Activated CD4-positive, alpha-beta T cell treated with anti-CD3 and anti-CD28 coated beads, Interleukin-2, amount 10 ng/mL, durations not matched to agents 24 days and 14 days (primary cell): ENCODE measurements at regions of chr14 and their contacts with region 1.

Region 1: GRCh38 chr14:60724137-60724619 is at the start of gene SIX4:
- DNase-seq: peak; percentile 63
- H3K4me3 Mint-ChIP-seq: peak within 1 kb of the TSS; percentile 90
- H3K27ac Mint-ChIP-seq: peak within 1 kb of the TSS; percentile 60
- H3K4me1 Mint-ChIP-seq: peaks cover 24% of the 10 kb centered on the region
- H3K27me3 Mint-ChIP-seq: peaks cover 77% of the 10 kb centered on the region
- total RNA-seq, gene SIX4: 0.23 and 0.52 TPM in 2 replicates

Region 2: DNA sequence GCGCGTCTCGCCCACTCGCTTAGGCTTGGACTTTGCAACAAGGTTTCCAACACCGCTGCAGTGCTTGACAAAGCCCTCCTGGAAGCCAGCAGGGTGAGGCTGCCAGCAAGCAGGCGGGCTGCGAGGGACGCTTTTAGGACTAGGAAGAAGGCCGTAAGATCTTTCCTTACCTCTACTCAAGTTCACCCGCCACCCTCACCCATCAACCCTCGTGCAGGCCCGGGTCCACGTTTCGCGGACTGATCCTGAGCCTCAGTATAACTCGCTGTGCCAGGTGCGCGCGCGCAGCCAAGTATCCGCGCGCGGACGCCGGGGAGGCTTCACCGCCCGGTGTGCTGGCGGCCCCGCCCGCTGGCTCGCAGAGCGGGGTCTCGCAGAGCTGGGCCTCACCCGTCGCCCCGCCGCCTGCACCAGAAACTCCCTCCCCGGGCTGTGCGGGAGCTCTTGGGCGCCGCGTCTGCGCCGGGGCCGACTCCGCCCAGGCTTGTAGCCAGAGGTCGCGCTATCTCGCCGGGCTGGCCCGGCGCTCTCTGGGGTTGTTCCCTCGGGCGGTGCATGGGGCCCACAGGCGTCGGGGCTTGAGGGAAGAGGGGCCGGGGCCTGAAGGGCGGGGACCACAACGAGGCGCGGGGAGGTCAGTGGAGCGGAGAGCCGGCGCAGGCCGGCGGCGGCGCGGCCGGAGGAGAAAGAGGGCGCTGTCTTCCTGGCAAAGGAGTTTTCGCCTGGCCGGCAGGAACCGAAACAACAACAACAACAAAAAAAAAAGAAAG is 67.3 kb before region 1 on chr14:
- intact Hi-C with region 1: loop called (anchors 5 kb)
- DNase-seq: peak; percentile 81
- H3K4me3 Mint-ChIP-seq: peak overlapping the region; percentile 88
- H3K27ac Mint-ChIP-seq: peak overlapping the region; percentile 41
- H3K4me1 Mint-ChIP-seq: peaks cover 34% of the 10 kb centered on the region
- H3K27me3 Mint-ChIP-seq: peaks cover 84% of the 10 kb centered on the region

Region 3: DNA sequence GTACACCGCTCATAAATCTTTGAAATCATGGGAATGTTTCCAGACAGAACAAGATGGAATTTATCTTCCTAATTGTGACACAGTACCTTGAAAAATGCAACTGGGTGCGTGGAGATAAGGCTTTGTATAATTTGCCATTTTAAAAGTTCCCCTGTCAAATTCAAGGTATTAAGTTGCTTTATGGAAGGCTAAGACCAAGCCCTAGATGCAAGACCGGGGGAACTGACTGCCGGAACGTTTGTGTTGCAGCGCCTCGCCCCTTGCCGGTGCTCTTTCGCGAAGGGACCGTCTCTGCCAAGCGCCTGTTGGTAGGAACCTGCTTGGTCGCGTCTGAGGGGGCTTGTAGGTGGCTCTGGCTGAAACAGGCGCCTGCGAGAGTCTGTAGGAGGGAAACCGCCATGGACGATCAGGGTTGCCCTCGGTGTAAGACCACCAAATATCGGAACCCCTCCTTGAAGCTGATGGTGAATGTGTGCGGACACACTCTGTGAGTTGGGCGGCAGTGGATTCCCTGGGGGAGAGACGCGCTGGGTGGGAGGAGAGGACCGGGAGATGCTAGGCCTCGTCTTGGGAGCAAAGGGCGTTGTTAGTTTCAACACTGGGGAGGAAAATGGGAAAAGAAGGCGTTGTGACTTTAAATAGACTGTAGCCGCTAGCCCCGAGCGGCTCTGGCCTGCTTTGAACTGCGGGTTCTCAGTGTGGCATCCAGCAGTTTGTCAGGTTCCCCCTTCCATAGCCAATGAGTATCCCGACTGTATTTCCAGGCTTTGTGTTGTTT is 10.5 kb after region 1 on chr14 and contains the start of gene MNAT1:
- intact Hi-C with region 1: loop called (anchors 1 kb)
- DNase-seq: peak; percentile 93
- H3K4me3 Mint-ChIP-seq: peak within 1 kb of the TSS; percentile 100
- H3K27ac Mint-ChIP-seq: peak within 1 kb of the TSS; percentile 88
- H3K4me1 Mint-ChIP-seq: peaks cover 16% of the 10 kb centered on the region
- H3K27me3 Mint-ChIP-seq: peaks cover 35% of the 10 kb centered on the region
- total RNA-seq, gene MNAT1: 42.6 and 45.0 TPM in 2 replicates

Region 4: GRCh38 chr14:60758885-60759284 is 34.7 kb after region 1 on chr14:
- intact Hi-C with region 1: no loop called
- DNase-seq: no peak
- H3K4me3 Mint-ChIP-seq: peak overlapping the region; percentile 60
- H3K27ac Mint-ChIP-seq: no peak overlapping the region
- H3K4me1 Mint-ChIP-seq: peaks cover 45% of the 10 kb centered on the region
- H3K27me3 Mint-ChIP-seq: peaks cover 3% of the 10 kb centered on the region

Region 5: GRCh38 chr14:60980811-60981632 is 256.8 kb after region 1 on chr14 and contains the starts of genes SLC38A6 and TRMT5:
- intact Hi-C with region 1: loop called (anchors 2 kb)
- DNase-seq: peak; percentile 98
- H3K4me3 Mint-ChIP-seq: no peak within 1 kb of the TSS
- H3K27ac Mint-ChIP-seq: no peak within 1 kb of the TSS
- H3K4me1 Mint-ChIP-seq: peaks cover 21% of the 10 kb centered on the region
- H3K27me3 Mint-ChIP-seq: no peaks in the 10 kb centered on the region
- total RNA-seq, gene SLC38A6: 4.7 and 5.9 TPM in 2 replicates
- total RNA-seq, gene TRMT5: 16.1 and 18.0 TPM in 2 replicates

Region 6: GRCh38 chr14:61025251-61026223 is 301.4 kb after region 1 on chr14:
- intact Hi-C with region 1: loop called (anchors 5 kb)
- DNase-seq: peak; percentile 87
- H3K4me3 Mint-ChIP-seq: no peak overlapping the region
- H3K27ac Mint-ChIP-seq: no peak overlapping the region
- H3K4me1 Mint-ChIP-seq: no peaks in the 10 kb centered on the region
- H3K27me3 Mint-ChIP-seq: peaks cover 2% of the 10 kb centered on the region

Region 7: DNA sequence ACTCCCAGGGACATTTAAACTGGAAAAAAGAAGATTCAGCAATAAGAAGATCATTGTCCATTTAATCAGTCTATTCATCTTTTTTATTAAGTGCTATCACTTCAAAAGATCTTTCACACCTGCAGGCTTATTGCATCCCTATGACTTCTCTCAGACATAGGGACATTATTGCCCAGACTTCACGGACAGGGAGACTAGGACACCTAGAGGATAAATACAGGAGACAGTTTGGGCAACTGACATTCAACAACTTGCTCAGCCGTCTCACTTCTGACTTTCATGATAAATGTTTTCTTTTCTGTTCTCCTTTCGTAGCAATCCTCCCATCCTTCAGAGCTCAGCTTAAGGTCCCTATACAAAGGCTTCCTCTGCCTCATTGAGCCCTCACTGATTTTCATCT is 472.6 kb after region 1 on chr14:
- intact Hi-C with region 1: loop called (anchors 10 kb)
- DNase-seq: no peak
- H3K4me3 Mint-ChIP-seq: no peak overlapping the region
- H3K27ac Mint-ChIP-seq: no peak overlapping the region
- H3K4me1 Mint-ChIP-seq: no peaks in the 10 kb centered on the region
- H3K27me3 Mint-ChIP-seq: peaks cover 49% of the 10 kb centered on the region